ENCODE measurements at regions of chr17 and their contacts with region 1.

Region 1: DNA sequence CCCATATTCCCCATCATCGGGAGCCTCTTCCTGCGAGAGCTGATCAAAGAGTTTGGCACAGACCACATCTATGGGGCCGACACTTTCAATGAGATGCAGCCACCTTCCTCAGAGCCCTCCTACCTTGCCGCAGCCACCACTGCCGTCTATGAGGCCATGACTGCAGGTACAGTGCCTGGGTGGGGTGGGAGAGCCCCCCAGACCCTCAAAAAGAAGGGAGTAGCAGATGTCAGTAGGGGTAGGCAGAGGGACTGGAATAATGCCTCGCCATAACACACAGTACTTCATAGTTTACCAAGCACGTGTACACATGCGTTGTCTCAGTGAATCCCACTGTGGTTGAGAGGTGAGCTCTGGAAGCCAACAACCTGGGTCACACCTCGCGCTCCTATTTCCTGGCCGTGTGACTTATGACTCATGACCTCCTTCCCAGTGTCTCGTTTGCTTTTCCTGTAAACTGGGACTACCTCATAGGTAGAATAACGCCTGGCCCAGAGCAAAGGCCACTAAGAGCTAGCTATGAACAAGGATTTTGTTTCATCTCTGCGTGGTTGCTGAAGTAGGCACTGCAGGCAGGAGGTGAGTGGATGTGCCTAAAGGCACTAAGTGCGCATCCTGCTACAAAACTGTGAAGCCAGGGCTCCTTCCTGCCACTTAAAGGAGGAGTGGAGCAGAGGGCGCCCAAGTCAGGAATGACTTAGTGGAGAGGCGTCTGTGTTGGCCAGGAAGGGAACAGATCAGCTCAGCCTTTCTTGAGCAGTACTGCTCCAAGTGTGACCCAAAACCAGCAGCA is 5.2 kb downstream of the NAGLU start:
- DNase-seq: no peak
- ATAC-seq: peak; percentile 29
- H3K4me3 Mint-ChIP-seq: peak overlapping the region; percentile 28
- H3K27ac Mint-ChIP-seq: peak overlapping the region; percentile 39
- H3K4me1 Mint-ChIP-seq: peaks cover 25% of the 10 kb centered on the region
- H3K27me3 Mint-ChIP-seq: no peaks in the 10 kb centered on the region
- CTCF ChIP-seq: no peak

Region 2: DNA sequence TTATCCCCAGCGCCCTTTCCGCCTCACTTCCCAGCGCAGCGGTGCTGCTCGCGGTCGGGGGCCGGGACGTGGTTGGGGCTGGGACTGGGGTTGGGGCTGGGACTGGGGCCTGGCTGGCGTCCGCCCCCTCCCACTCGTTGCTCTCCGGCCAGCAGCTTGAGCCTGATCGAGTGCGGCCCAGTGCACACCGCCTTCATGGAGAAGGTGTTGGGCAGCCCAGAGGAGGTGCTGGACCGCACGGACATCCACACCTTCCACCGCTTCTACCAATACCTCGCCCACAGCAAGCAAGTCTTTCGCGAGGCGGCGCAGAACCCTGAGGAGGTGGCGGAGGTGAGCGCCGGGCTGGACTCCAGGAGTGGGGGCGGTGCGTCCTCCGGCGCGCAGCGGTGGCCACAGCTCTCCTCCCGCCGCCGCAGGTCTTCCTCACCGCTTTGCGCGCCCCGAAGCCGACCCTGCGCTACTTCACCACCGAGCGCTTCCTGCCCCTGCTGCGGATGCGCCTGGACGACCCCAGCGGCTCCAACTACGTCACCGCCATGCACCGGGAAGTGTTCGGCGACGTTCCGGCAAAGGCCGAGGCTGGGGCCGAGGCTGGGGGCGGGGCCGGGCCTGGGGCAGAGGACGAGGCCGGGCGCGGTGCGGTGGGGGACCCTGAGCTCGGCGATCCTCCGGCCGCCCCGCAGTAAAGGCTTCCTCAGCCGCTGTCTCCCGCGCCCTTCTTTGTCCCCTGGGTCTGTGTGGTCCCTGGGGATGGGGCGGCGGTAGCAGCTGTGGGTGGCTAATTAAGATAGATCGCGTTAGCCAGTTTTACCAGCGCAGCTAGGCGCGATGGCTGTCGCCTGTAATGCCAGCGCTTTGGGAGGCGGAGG is 13.2 kb after region 1 on chr17:
- CTCF ChIA-PET with region 1: interaction called, 6 read pairs
- POLR2A ChIA-PET with region 1: interaction called, 12 read pairs
- intact Hi-C with region 1: no loop called
- DNase-seq: peak; percentile 90
- ATAC-seq: peak; percentile 94
- H3K4me3 Mint-ChIP-seq: peak overlapping the region; percentile 91
- H3K27ac Mint-ChIP-seq: peak overlapping the region; percentile 85
- H3K4me1 Mint-ChIP-seq: peaks cover 12% of the 10 kb centered on the region
- H3K27me3 Mint-ChIP-seq: no peaks in the 10 kb centered on the region
- CTCF ChIP-seq: no peak